CD4-positive, alpha-beta memory T cell (primary cell): ENCODE measurements at regions of chr7 and their contacts with region 1.

Region 1: DNA sequence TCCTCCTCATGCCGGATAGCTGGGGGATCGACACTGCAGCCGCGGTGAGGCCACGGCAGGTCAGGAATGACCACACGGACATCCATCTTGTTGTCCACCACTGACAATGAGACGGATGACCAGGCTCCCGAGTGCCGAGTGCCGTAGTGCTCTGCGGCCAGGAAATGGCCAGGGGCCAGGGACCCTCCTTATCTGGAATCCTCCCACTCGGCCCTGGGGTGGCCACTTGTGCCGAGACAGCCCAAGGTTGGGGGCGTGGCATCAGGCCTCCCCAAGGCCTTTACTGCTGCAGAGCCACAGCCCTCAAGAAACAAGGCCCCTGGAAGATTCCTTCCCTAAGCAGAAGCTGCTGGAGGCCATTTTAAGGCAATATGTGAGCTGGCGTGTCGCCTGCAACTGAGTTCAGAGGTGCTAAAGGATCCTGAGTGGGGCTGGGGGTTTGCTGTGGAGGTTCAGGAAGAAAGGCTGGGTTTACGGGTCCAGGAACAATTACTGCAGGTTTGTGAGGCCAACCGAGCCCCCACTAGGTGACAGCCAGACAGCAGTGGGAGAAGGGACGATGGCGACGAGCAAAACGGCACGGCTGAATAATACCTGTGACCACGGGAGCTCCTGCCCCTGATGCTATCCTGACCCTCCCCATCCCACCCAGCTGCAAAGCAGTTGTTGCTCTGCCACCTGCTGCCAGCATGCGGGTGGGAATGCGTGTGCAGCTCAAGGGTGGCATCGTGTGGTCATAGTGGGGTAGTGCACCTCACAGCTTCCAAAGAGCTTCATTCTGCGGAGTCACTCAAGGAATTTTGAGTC is 31.6 kb upstream of the LEP start:
- DNase-seq: peak; percentile 58 to 66 (median 63)
- H3K4me3 ChIP-seq: no peak overlapping the region
- H3K4me3 Mint-ChIP-seq: no peak overlapping the region
- H3K27ac ChIP-seq: no peak overlapping the region
- H3K27ac Mint-ChIP-seq: no peak overlapping the region
- H3K4me1 ChIP-seq: no peaks in the 10 kb centered on the region
- H3K4me1 Mint-ChIP-seq: peaks cover 0 to 1% (median 0%) of the 10 kb centered on the region in 4 donors
- H3K27me3 ChIP-seq: no peaks in the 10 kb centered on the region
- H3K27me3 Mint-ChIP-seq: peaks cover 13 to 21% of the 10 kb centered on the region in 2 donors

Region 2: GRCh38 chr7:127708788-127709187 is 500.6 kb before region 1 on chr7:
- CTCF ChIA-PET with region 1: interaction called, 267 read pairs
- POLR2A ChIA-PET with region 1: interaction called, 7 read pairs
- intact Hi-C with region 1: loop called (anchors 1 kb)
- DNase-seq: peak; percentile 61 to 71 (median 64)
- H3K4me3 ChIP-seq: no peak overlapping the region
- H3K4me3 Mint-ChIP-seq: no peak overlapping the region
- H3K27ac ChIP-seq: no peak overlapping the region
- H3K27ac Mint-ChIP-seq: no peak overlapping the region
- H3K4me1 ChIP-seq: no peaks in the 10 kb centered on the region
- H3K4me1 Mint-ChIP-seq: peaks cover 0 to 6% (median 2%) of the 10 kb centered on the region in 4 donors
- H3K27me3 ChIP-seq: no peaks in the 10 kb centered on the region
- H3K27me3 Mint-ChIP-seq: no peaks in the 10 kb centered on the region

Region 3: DNA sequence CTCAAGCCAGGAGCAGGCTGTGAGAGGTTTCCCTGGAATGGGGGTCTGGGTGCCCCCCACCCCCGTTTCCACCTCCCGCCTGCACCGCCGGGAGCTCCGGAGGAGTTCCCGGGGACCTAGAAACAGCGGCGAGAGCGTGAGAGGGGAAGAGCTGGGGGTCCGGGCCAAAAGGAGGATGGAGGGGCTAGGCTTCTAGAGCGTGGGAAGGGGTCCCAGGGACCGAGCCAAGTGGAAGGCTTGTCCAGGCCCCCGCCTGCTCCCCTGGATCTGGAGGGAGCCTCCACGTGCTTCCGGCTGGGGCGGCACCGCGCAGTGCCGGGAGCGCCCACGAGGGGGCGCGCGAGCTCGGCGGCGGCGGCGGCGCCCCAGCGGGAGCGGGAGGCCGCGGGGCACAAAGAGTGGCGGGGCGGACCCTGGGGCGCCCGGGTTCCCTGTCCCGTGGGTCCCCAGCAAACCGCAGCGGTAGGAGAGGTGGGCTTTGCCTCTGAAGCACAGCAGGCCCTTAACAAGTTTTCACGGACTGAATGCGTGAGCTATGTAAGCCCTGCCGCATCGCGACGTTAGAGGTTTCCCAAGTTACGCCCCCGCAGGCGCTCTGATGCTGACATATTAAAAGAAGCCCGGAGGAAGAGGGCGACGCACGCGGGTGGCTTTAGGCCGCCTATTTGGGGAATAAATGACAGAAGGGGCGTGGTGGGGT is 73.8 kb before region 1 on chr7:
- CTCF ChIA-PET with region 1: interaction called, 33 read pairs
- POLR2A ChIA-PET with region 1: no interaction called
- intact Hi-C with region 1: loop called (anchors 1 kb)
- DNase-seq: peak in 4 of 5 donors; percentile 50 to 73 (median 60)
- H3K4me3 ChIP-seq: peak overlapping the region; percentile 11 to 66
- H3K4me3 Mint-ChIP-seq: peak overlapping the region; percentile 78 to 88 (median 82)
- H3K27ac ChIP-seq: no peak overlapping the region
- H3K27ac Mint-ChIP-seq: peak overlapping the region in 3 of 7 donors; percentile 35 to 53 (median 36)
- H3K4me1 ChIP-seq: peaks cover 16% of the 10 kb centered on the region
- H3K4me1 Mint-ChIP-seq: peaks cover 8 to 21% (median 13%) of the 10 kb centered on the region in 4 donors
- H3K27me3 ChIP-seq: peaks cover 23% of the 10 kb centered on the region
- H3K27me3 Mint-ChIP-seq: peaks cover 23 to 31% of the 10 kb centered on the region in 2 donors

Region 4: GRCh38 chr7:128197589-128197988 is 11.8 kb before region 1 on chr7:
- CTCF ChIA-PET with region 1: interaction called, 11 read pairs
- POLR2A ChIA-PET with region 1: interaction called, 3 read pairs
- intact Hi-C with region 1: no loop called
- DNase-seq: no peak
- H3K4me3 ChIP-seq: no peak overlapping the region
- H3K4me3 Mint-ChIP-seq: no peak overlapping the region
- H3K27ac ChIP-seq: no peak overlapping the region
- H3K27ac Mint-ChIP-seq: no peak overlapping the region
- H3K4me1 ChIP-seq: peaks cover 13% of the 10 kb centered on the region
- H3K4me1 Mint-ChIP-seq: peaks cover 10 to 18% (median 13%) of the 10 kb centered on the region in 4 donors
- H3K27me3 ChIP-seq: peaks cover 8% of the 10 kb centered on the region
- H3K27me3 Mint-ChIP-seq: peaks cover 21 to 22% of the 10 kb centered on the region in 2 donors

Region 5: DNA sequence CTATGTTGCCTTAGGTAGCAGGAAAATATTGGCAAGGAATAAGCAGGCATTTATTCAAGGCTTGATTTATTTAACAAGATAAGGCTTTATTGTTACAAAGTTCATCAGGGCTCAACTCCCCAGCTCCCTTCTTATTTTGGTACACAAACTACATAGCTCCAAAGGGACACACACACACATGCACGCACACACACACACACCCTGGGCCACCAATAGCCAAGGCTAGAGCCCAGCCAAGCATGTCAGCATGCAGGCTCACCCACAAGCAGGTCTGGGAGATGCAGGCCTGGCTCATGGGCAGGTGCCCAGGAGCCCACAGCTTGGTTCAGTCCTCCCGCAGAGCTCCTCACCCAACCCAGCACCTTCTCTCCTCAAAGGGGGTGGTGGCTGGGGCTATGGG is 55.0 kb after region 1 on chr7:
- CTCF ChIA-PET with region 1: no interaction called
- POLR2A ChIA-PET with region 1: no interaction called
- intact Hi-C with region 1: no loop called
- DNase-seq: no peak
- H3K4me3 ChIP-seq: no peak overlapping the region
- H3K4me3 Mint-ChIP-seq: no peak overlapping the region
- H3K27ac ChIP-seq: no peak overlapping the region
- H3K27ac Mint-ChIP-seq: no peak overlapping the region
- H3K4me1 ChIP-seq: no peaks in the 10 kb centered on the region
- H3K4me1 Mint-ChIP-seq: no peaks in the 10 kb centered on the region
- H3K27me3 ChIP-seq: peaks cover 4% of the 10 kb centered on the region
- H3K27me3 Mint-ChIP-seq: peaks cover 16 to 28% of the 10 kb centered on the region in 2 donors